PC-3 (cell line): ENCODE measurements at regions of chr7 and their contacts with region 1.

Region 1: DNA sequence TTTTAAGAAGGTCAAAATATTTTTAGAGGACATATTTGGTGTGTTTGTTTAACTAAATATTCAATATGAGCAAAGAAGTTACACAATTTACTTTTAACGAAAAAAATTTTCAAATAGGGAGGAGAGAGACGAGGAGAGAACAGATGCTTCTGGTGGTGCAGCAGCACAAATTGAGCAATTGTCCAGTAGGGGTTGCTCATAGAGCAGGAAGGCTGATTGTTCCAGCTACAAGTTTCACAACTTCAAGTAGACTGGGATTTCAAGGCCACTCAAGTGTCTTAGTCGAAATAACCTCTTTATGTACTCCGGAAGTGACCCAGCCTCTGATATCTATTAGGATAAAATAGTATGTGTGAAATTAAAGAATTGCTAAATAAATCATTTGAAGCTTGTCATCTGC is 197.9 kb downstream of the HDAC9 start:
- DNase-seq: peak; percentile 71
- ATAC-seq: peak; percentile 87
- H3K4me3 ChIP-seq: no peak overlapping the region
- H3K27ac ChIP-seq: no peak overlapping the region
- H3K4me1 ChIP-seq: no peaks in the 10 kb centered on the region
- H3K27me3 ChIP-seq: no peaks in the 10 kb centered on the region
- CTCF ChIP-seq: peak; percentile 88

Region 2: GRCh38 chr7:19060761-19061259 is 367.4 kb after region 1 on chr7:
- CTCF ChIA-PET with region 1: no interaction called
- POLR2A ChIA-PET with region 1: no interaction called
- intact Hi-C with region 1: loop called (anchors 5 kb)
- DNase-seq: peak; percentile 68
- ATAC-seq: peak; percentile 87
- H3K4me3 ChIP-seq: no peak overlapping the region
- H3K27ac ChIP-seq: no peak overlapping the region
- H3K4me1 ChIP-seq: peaks cover 14% of the 10 kb centered on the region
- H3K27me3 ChIP-seq: no peaks in the 10 kb centered on the region
- CTCF ChIP-seq: no peak

Region 3: GRCh38 chr7:19621740-19622139 is 928.3 kb after region 1 on chr7:
- CTCF ChIA-PET with region 1: no interaction called
- POLR2A ChIA-PET with region 1: no interaction called
- intact Hi-C with region 1: loop called (anchors 5 kb)
- DNase-seq: peak; percentile 72
- ATAC-seq: peak; percentile 94
- H3K4me3 ChIP-seq: 0 out of 2 replicates have a peak overlapping the region, but pooled peaks have one; percentile 19
- H3K27ac ChIP-seq: no peak overlapping the region
- H3K4me1 ChIP-seq: 0 out of 2 replicates have a peak, but pooled peaks cover 4% of the 10 kb centered on the region
- H3K27me3 ChIP-seq: peaks cover 12% of the 10 kb centered on the region; the same call in 1 of the 2 replicates
- CTCF ChIP-seq: peak; percentile 66